ENCODE measurements at regions of chr14 and their contacts with region 1.

Region 1: GRCh38 chr14:70972107-70972976 is 65.1 kb downstream of the PCNX1 start:
- H3K4me3 Mint-ChIP-seq: no peak overlapping the region
- H3K27ac Mint-ChIP-seq: no peak overlapping the region
- H3K4me1 Mint-ChIP-seq: peaks cover 6% of the 10 kb centered on the region
- H3K27me3 Mint-ChIP-seq: no peaks in the 10 kb centered on the region

Region 2: DNA sequence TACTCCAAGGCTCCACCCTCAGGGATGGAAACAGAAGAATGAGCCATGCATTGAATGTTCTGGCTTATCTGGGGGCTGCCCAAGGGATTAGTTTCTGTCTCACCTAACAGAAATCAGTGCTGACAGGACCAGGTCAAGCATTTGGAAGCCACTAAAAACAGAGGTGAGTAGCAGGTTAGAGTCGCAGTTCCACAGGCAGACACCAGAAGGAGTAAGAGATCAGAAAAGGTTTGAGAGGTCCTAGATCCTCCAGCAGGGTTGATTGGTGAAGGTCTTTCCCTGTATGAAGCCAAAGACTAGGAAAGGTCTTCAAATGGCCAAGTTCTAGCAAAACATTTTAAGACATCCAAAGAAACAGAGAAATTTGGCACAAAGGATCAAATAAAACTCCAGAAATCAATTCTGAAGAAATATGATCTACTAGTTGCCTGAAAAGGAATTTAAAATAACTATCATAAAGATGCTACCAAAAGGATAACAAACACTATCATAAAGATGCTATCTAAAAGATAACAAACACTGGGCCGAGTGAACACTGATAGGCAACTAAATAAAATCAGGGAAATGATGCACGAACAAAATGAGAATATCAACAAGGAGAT is 350.1 kb before region 1 on chr14:
- intact Hi-C with region 1: loop called (anchors 10 kb)
- H3K4me3 Mint-ChIP-seq: no peak overlapping the region
- H3K27ac Mint-ChIP-seq: no peak overlapping the region
- H3K4me1 Mint-ChIP-seq: no peaks in the 10 kb centered on the region
- H3K27me3 Mint-ChIP-seq: peaks cover 7% of the 10 kb centered on the region

Region 3: GRCh38 chr14:70821584-70822529 is 150.5 kb before region 1 on chr14:
- intact Hi-C with region 1: loop called (anchors 1 kb)
- H3K4me3 Mint-ChIP-seq: peak overlapping the region; percentile 77
- H3K27ac Mint-ChIP-seq: peak overlapping the region; percentile 43
- H3K4me1 Mint-ChIP-seq: peaks cover 14% of the 10 kb centered on the region
- H3K27me3 Mint-ChIP-seq: peaks cover 63% of the 10 kb centered on the region

Region 4: GRCh38 chr14:70873627-70874026 is 98.7 kb before region 1 on chr14:
- intact Hi-C with region 1: loop called (anchors 5 kb)
- H3K4me3 Mint-ChIP-seq: no peak overlapping the region
- H3K27ac Mint-ChIP-seq: no peak overlapping the region
- H3K4me1 Mint-ChIP-seq: peaks cover 6% of the 10 kb centered on the region
- H3K27me3 Mint-ChIP-seq: peaks cover 18% of the 10 kb centered on the region

Region 5: GRCh38 chr14:70907176-70907995 is 65.0 kb before region 1 on chr14 and contains the start of gene PCNX1:
- intact Hi-C with region 1: loop called (anchors 5 kb)
- H3K4me3 Mint-ChIP-seq: peak within 1 kb of the TSS; percentile 95
- H3K27ac Mint-ChIP-seq: peak within 1 kb of the TSS; percentile 91
- H3K4me1 Mint-ChIP-seq: peaks cover 42% of the 10 kb centered on the region
- H3K27me3 Mint-ChIP-seq: peaks cover 12% of the 10 kb centered on the region